ENCODE measurements at regions of chr2 and their contacts with region 1.

Region 1: DNA sequence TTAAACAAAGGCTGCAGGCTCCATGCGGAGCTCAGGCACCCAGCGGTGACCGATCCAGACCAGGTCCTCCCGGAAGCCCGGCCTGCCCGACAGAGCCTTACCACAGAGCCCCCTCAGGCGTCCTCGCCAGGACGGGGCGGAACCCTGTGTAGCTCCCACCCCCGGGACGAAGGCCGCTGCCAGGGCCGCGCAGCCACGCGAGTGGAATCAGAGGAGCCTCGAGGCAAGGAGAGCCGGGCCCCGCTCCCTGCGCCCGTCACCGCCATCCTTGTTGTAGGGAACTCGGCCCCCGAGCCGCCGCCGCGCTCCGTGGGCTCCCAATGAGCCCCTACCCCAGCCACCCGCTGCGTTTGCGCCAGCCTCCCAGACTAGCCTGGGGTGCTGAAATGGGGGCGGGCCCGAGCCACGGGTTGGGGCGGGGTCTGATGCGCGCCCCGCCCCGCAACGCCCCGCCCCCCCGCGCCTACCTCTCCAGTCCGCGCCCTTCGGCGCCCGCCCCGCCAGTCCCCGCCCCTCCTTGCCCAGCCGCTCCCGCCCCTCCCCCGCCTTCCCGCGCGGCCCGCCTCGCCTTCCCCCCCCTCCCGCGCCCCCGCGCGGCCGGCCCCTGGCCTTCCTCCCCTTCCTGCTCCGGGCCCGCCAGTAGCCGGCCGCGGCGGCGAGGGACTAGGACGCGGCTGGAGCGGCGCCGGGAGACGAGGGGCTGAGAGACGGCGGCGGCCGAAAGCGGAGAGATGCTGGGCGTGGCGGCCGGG is at the start of gene LIMS1:
- DNase-seq: peak; percentile 76 to 93 (median 86)
- ATAC-seq: peak; percentile 93
- H3K4me3 ChIP-seq: peak within 1 kb of the TSS; percentile 91
- H3K4me3 Mint-ChIP-seq: peak within 1 kb of the TSS; percentile 99
- H3K27ac ChIP-seq: peak within 1 kb of the TSS in 1 of 2 donors; percentile 50
- H3K27ac Mint-ChIP-seq: peak within 1 kb of the TSS; percentile 86
- H3K4me1 ChIP-seq: peaks cover 25% of the 10 kb centered on the region
- H3K4me1 Mint-ChIP-seq: peaks cover 41% of the 10 kb centered on the region
- H3K27me3 ChIP-seq: no peaks in the 10 kb centered on the region
- H3K27me3 Mint-ChIP-seq: no peaks in the 10 kb centered on the region
- CTCF ChIP-seq: no peak
- total RNA-seq, gene LIMS1: 18.5 to 21.3 TPM

Region 2: GRCh38 chr2:108436976-108437375 is 97.0 kb before region 1 on chr2:
- CTCF ChIA-PET with region 1: no interaction called
- POLR2A ChIA-PET with region 1: no interaction called
- intact Hi-C with region 1: no loop called
- DNase-seq: no peak
- ATAC-seq: no peak
- H3K4me3 ChIP-seq: no peak overlapping the region
- H3K4me3 Mint-ChIP-seq: no peak overlapping the region
- H3K27ac ChIP-seq: no peak overlapping the region
- H3K27ac Mint-ChIP-seq: no peak overlapping the region
- H3K4me1 ChIP-seq: no peaks in the 10 kb centered on the region
- H3K4me1 Mint-ChIP-seq: no peaks in the 10 kb centered on the region
- H3K27me3 ChIP-seq: no peaks in the 10 kb centered on the region
- H3K27me3 Mint-ChIP-seq: no peaks in the 10 kb centered on the region
- CTCF ChIP-seq: no peak

Region 3: DNA sequence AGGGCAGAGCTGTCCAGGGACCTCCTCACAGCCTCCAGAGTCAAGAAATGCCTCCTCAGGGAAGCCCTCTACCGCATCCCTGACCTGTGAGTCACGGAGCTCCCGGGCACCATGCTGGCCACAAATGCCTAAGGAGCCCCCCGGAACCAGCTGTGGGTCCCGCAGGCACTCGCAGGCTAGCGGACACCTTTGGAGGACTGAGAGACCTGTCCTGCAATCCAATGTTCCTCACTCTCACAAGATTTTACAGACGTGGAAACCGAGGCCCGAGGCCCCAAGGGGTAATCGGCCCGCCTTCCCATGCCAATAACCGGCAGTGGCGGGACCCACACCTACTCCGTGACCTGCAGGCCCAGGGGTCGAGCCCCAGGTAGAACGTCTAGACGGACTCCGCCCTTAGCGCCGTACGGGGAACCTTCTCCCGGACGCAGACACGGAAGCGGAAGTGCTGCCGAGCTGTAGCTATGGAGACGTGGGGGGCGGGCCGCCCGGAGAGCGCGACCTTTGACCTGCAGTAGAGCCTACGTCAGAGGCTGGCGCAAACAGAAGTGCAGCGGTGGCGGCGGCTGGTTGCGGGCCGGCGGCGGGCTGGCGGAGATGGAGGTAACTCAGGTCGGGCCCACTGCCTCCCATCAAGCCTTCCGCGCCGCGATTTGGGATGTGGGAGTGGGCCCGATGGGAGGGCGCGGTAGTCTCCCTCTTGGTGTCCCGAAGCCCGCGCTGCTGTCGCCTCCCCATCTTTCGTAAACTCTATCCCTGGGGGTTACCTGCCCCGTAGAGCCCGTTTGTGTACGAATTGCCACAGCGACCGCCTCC is 85.1 kb before region 1 on chr2 and contains the start of gene GCC2:
- CTCF ChIA-PET with region 1: no interaction called
- POLR2A ChIA-PET with region 1: interaction called, 7 read pairs
- intact Hi-C with region 1: loop called in 1 of 2 experiments (anchors 2 kb)
- DNase-seq: peak; percentile 94 to 98 (median 96)
- ATAC-seq: peak; percentile 93
- H3K4me3 ChIP-seq: peak within 1 kb of the TSS; percentile 88
- H3K4me3 Mint-ChIP-seq: peak within 1 kb of the TSS; percentile 97
- H3K27ac ChIP-seq: peak within 1 kb of the TSS; percentile 88 to 97
- H3K27ac Mint-ChIP-seq: peak within 1 kb of the TSS; percentile 97
- H3K4me1 ChIP-seq: peaks cover 24% of the 10 kb centered on the region
- H3K4me1 Mint-ChIP-seq: peaks cover 50% of the 10 kb centered on the region
- H3K27me3 ChIP-seq: no peaks in the 10 kb centered on the region
- H3K27me3 Mint-ChIP-seq: no peaks in the 10 kb centered on the region
- CTCF ChIP-seq: no peak
- total RNA-seq, gene GCC2: 134 to 141 TPM

Region 4: DNA sequence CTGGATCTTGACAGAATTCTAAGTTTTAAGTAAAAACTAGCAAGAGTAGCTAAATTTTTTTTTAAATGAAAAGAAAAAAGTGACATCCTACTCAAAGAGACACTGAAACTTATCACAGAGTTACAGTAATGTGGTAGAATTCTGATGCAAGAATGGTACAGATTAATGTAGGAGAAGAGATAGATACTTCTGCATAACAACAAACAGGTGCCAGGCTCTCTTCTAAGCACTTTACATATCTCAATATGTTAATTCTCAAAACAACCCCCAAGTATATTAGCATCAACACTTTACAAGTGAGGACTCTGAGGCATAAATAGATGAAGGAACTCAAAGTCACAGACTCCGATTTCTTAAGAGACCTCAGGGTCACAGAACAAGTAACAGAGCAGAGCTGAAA is 56.9 kb before region 1 on chr2:
- CTCF ChIA-PET with region 1: no interaction called
- POLR2A ChIA-PET with region 1: no interaction called
- intact Hi-C with region 1: loop called in 1 of 2 experiments (anchors 10 kb)
- DNase-seq: no peak
- ATAC-seq: no peak
- H3K4me3 ChIP-seq: no peak overlapping the region
- H3K4me3 Mint-ChIP-seq: no peak overlapping the region
- H3K27ac ChIP-seq: no peak overlapping the region
- H3K27ac Mint-ChIP-seq: no peak overlapping the region
- H3K4me1 ChIP-seq: no peaks in the 10 kb centered on the region
- H3K4me1 Mint-ChIP-seq: peaks cover 2% of the 10 kb centered on the region
- H3K27me3 ChIP-seq: no peaks in the 10 kb centered on the region
- H3K27me3 Mint-ChIP-seq: no peaks in the 10 kb centered on the region
- CTCF ChIP-seq: no peak

Region 5: GRCh38 chr2:108607706-108608301 is 73.8 kb after region 1 on chr2:
- CTCF ChIA-PET with region 1: no interaction called
- POLR2A ChIA-PET with region 1: no interaction called
- intact Hi-C with region 1: no loop called
- DNase-seq: peak; percentile 30 to 80 (median 54)
- ATAC-seq: peak; percentile 54
- H3K4me3 ChIP-seq: no peak overlapping the region
- H3K4me3 Mint-ChIP-seq: no peak overlapping the region
- H3K27ac ChIP-seq: no peak overlapping the region
- H3K27ac Mint-ChIP-seq: no peak overlapping the region
- H3K4me1 ChIP-seq: peaks cover 32% of the 10 kb centered on the region
- H3K4me1 Mint-ChIP-seq: peaks cover 44% of the 10 kb centered on the region
- H3K27me3 ChIP-seq: no peaks in the 10 kb centered on the region
- H3K27me3 Mint-ChIP-seq: no peaks in the 10 kb centered on the region
- CTCF ChIP-seq: peak; percentile 81

Region 6: DNA sequence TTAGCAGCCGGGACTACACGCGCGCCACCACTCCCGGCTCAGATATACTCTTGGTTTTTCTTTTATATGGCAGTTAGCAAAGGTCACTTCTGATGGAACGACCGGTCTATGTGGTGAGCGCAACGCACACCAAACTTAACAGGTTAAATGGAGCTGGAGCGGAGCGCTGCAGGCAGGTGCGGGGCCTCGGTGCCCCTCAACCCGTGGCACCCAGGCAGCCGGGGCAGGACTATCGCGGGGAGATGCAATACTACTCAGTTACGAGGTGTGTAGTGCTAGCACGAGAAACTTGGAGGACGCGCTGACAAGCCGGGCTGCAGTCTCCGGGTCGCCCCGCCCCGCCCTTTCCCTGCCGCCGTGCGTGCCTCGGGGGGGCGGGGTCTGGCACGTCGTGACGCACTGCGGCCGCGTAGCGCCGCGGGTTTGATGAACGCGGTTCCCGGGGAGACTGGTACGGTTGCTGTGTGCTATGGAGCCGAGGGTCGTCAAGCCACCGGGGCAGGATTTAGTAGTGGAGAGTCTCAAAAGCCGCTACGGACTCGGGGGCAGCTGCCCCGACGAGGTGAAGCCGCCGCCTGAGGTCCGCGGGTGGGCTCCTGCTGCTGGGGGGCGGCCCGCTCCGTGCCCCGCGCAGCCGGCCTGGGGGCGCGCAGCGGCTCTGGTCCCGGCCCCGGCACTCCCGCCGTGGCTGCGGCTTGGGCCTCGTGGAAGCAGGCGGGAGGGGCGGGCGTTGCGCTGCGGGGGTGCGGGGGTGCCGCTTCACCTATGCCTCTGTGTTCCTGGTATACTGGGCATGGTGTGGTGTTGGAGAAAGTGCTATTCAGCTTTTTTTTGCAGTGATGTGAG is 252.6 kb after region 1 on chr2 and contains the start of gene CCDC138:
- CTCF ChIA-PET with region 1: no interaction called
- POLR2A ChIA-PET with region 1: no interaction called
- intact Hi-C with region 1: loop called in 1 of 2 experiments (anchors 5 kb)
- DNase-seq: peak; percentile 83 to 96 (median 90)
- ATAC-seq: peak; percentile 95
- H3K4me3 ChIP-seq: peak within 1 kb of the TSS; percentile 78
- H3K4me3 Mint-ChIP-seq: peak within 1 kb of the TSS; percentile 99
- H3K27ac ChIP-seq: peak within 1 kb of the TSS; percentile 33 to 63
- H3K27ac Mint-ChIP-seq: peak within 1 kb of the TSS; percentile 92
- H3K4me1 ChIP-seq: peaks cover 8% of the 10 kb centered on the region
- H3K4me1 Mint-ChIP-seq: peaks cover 22% of the 10 kb centered on the region
- H3K27me3 ChIP-seq: no peaks in the 10 kb centered on the region
- H3K27me3 Mint-ChIP-seq: no peaks in the 10 kb centered on the region
- CTCF ChIP-seq: no peak
- total RNA-seq, gene CCDC138: 4.7 to 5.8 TPM

Region 7: DNA sequence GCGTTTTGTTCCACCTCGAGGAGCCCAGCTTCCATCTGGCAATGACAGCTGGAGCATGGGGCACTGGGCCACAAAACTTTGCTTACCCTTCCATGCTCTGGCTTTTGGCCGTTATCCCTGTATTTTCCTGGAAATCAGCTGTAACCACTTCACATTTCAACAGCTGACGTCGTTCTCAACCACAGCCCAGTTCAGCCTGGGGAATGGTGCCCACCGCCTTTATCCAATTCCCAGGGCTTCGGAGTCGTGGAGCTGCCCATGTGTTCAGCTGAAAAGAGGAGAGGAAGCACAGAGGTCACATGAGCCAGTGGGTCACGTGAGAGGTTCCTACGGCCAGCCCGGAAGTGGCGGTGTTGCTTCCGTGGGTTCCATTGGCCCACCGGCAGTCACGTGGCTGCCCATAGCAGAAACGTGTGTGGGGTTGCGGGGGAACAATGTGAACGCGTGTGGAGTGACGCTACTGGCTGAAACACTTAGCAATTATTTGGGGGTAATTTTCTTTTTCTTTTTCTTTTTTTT is 471.7 kb after region 1 on chr2:
- CTCF ChIA-PET with region 1: no interaction called
- POLR2A ChIA-PET with region 1: no interaction called
- intact Hi-C with region 1: no loop called
- DNase-seq: no peak
- ATAC-seq: no peak
- H3K4me3 ChIP-seq: no peak overlapping the region
- H3K4me3 Mint-ChIP-seq: no peak overlapping the region
- H3K27ac ChIP-seq: no peak overlapping the region
- H3K27ac Mint-ChIP-seq: no peak overlapping the region
- H3K4me1 ChIP-seq: peaks cover 8% of the 10 kb centered on the region
- H3K4me1 Mint-ChIP-seq: peaks cover 48% of the 10 kb centered on the region
- H3K27me3 ChIP-seq: no peaks in the 10 kb centered on the region
- H3K27me3 Mint-ChIP-seq: no peaks in the 10 kb centered on the region
- CTCF ChIP-seq: no peak

Region 8: GRCh38 chr2:109582928-109583895 is 1049.2 kb after region 1 on chr2:
- CTCF ChIA-PET with region 1: no interaction called
- POLR2A ChIA-PET with region 1: no interaction called
- intact Hi-C with region 1: no loop called
- DNase-seq: no peak
- ATAC-seq: no peak
- H3K4me3 ChIP-seq: no peak overlapping the region
- H3K4me3 Mint-ChIP-seq: no peak overlapping the region
- H3K27ac ChIP-seq: no peak overlapping the region
- H3K27ac Mint-ChIP-seq: no peak overlapping the region
- H3K4me1 ChIP-seq: no peaks in the 10 kb centered on the region
- H3K4me1 Mint-ChIP-seq: no peaks in the 10 kb centered on the region
- H3K27me3 ChIP-seq: no peaks in the 10 kb centered on the region
- H3K27me3 Mint-ChIP-seq: no peaks in the 10 kb centered on the region
- CTCF ChIP-seq: no peak

Measured in CD4-positive, alpha-beta T cell (primary cell).